CD4-positive, alpha-beta T cell (primary cell): ENCODE measurements at regions of chr2 and their contacts with region 1.

Region 1: DNA sequence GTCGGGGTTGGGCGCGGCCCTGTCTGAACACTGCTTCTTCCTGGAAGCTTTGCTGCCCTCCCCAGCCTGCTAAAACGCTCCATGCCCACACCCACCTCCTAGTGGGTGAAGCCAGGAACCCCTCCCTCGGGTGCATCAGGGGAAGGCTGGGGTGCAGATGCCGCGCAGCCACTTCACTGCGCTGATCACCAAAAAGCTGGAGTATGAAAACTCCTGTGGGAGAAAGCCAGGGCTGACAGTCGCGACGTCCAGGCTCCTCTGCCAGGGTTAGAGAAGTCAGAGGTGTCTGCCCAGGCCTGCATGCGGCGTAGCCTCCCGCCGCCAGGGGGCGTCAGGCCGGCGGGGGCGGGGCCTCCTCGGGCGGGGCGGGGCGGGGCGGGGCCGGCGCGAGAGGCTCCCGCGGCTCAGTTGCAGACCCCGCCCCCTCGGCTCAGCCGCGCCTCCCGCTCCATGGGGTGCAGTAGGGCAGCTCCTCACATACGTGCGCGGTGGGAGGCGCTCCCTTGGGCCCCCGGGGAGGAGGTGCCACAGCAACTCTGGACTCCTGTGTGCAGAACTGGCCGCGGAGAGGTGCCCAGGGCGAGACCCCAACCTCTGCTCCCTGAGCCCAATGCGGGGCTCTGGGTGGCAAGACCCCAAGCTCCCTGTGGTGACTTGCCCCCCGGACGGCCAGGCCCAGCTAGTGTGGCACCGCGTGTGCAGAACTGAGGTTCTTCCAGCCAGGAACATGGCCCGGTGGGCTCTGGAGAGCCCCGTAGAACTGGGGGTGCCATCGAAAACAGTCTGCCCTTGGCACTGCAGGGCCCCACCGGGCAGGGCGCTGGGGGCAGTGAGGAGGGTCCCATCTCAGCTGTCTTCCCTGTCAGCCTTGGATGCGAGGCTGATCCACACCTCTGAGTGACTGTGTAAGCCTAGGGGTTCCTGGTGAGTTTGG is 1.8 kb upstream of the RNPEPL1 start:
- DNase-seq: peak; percentile 89 to 98 (median 95)
- ATAC-seq: peak; percentile 60
- H3K4me3 ChIP-seq: peak overlapping the region; percentile 87
- H3K4me3 Mint-ChIP-seq: peak overlapping the region; percentile 96
- H3K27ac ChIP-seq: peak overlapping the region; percentile 91 to 97
- H3K27ac Mint-ChIP-seq: peak overlapping the region; percentile 98
- H3K4me1 ChIP-seq: peaks cover 88% of the 10 kb centered on the region
- H3K4me1 Mint-ChIP-seq: peaks cover 84% of the 10 kb centered on the region
- H3K27me3 ChIP-seq: no peaks in the 10 kb centered on the region
- H3K27me3 Mint-ChIP-seq: no peaks in the 10 kb centered on the region
- CTCF ChIP-seq: peak; percentile 86

Region 2: DNA sequence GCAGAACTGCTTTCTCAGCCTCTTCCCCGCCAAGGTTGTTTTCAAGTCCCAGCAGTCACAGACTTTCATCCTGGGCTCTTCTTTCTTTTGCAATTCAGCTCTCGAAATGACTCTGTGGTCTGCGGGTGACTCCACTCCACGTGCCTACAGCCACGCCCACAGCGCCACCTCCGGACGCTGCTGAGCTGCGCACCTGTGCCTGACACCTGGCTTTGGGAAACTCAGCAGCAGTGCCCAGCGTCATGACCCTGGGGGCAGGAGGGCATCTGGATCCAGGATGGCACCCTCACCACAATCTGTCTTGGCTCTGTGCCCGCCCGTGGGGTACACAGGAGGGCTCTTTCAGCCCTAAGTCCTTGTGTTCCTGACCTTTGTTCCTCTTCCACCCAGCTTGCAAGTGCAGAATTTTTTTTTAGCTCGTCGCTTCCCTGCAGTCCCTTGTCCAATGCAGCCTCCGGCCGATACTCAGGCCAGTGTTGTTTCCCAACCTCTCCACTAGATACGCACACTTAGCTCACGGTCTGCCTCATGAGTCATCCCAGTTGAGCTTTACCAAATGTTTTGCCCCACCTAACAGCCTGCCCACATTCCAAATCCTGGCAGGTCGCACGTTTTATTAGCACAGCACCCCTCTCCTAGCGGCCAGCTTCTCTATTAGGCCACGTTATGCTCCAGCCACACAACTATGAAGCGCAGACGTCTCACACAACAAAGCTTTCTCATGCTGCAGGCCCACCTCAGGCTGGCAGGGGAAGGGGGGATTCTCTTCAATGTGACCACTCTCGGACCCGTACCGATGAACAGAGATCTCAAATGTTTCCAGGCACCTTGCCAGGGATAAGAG is 13.5 kb after region 1 on chr2:
- CTCF ChIA-PET with region 1: interaction called, 54 read pairs
- POLR2A ChIA-PET with region 1: interaction called, 224 read pairs
- intact Hi-C with region 1: loop called (anchors 1 kb)
- DNase-seq: peak; percentile 68 to 93 (median 78)
- ATAC-seq: peak; percentile 97
- H3K4me3 ChIP-seq: no peak overlapping the region
- H3K4me3 Mint-ChIP-seq: peak overlapping the region; percentile 18
- H3K27ac ChIP-seq: peak overlapping the region; percentile 59 to 69
- H3K27ac Mint-ChIP-seq: peak overlapping the region; percentile 77
- H3K4me1 ChIP-seq: peaks cover 57% of the 10 kb centered on the region
- H3K4me1 Mint-ChIP-seq: peaks cover 33% of the 10 kb centered on the region
- H3K27me3 ChIP-seq: no peaks in the 10 kb centered on the region
- H3K27me3 Mint-ChIP-seq: no peaks in the 10 kb centered on the region
- CTCF ChIP-seq: peak; percentile 66

Region 3: GRCh38 chr2:240624950-240625621 is 58.6 kb after region 1 on chr2 and contains the start of gene GPR35:
- CTCF ChIA-PET with region 1: interaction called, 9 read pairs
- POLR2A ChIA-PET with region 1: interaction called, 26 read pairs
- intact Hi-C with region 1: loop called in 1 of 2 experiments (anchors 5 kb)
- DNase-seq: peak; percentile 37 to 97 (median 68)
- ATAC-seq: peak; percentile 65
- H3K4me3 ChIP-seq: peak within 1 kb of the TSS; percentile 24
- H3K4me3 Mint-ChIP-seq: peak within 1 kb of the TSS; percentile 36
- H3K27ac ChIP-seq: peak within 1 kb of the TSS; percentile 64 to 66
- H3K27ac Mint-ChIP-seq: peak within 1 kb of the TSS; percentile 87
- H3K4me1 ChIP-seq: peaks cover 99% of the 10 kb centered on the region
- H3K4me1 Mint-ChIP-seq: peaks cover 42% of the 10 kb centered on the region
- H3K27me3 ChIP-seq: no peaks in the 10 kb centered on the region
- H3K27me3 Mint-ChIP-seq: no peaks in the 10 kb centered on the region
- CTCF ChIP-seq: no peak
- total RNA-seq, gene GPR35: 7.1 to 7.2 TPM

Region 4: DNA sequence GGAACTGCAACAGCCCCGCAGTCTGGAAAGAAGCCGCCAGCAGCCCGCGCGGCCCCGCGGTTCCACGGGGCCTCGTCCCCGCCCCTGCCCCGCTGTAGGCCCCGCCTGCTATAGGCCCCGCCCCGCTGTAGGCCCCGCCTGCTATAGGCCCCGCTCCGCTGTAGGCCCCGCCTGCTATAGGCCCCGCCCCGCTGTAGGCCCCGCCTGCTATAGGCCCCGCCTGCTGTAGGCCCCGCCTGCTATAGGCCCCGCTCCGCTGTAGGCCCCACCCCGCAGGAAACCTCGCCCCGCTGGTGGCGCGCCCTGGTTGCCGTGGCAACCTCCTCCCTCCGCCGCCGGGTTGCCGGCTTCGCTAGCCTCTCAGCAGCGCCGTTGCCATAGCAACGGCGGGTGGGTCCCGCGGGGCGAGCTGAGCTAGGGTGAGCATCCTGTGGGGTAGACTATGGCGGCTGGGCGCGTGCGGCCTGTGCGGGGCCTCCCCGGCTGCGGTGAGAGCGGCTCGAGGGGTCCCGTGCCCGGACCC is 265.8 kb after region 1 on chr2:
- CTCF ChIA-PET with region 1: no interaction called
- POLR2A ChIA-PET with region 1: interaction called, 3 read pairs
- intact Hi-C with region 1: loop called in 1 of 2 experiments (anchors 2 kb)
- DNase-seq: peak; percentile 98 to 100 (median 99)
- ATAC-seq: peak; percentile 91
- H3K4me3 ChIP-seq: peak overlapping the region; percentile 43
- H3K4me3 Mint-ChIP-seq: peak overlapping the region; percentile 38
- H3K27ac ChIP-seq: no peak overlapping the region
- H3K27ac Mint-ChIP-seq: no peak overlapping the region
- H3K4me1 ChIP-seq: peaks cover 14% of the 10 kb centered on the region
- H3K4me1 Mint-ChIP-seq: no peaks in the 10 kb centered on the region
- H3K27me3 ChIP-seq: peaks cover 17 to 26% of the 10 kb centered on the region in 2 experiments
- H3K27me3 Mint-ChIP-seq: peaks cover 36% of the 10 kb centered on the region
- CTCF ChIP-seq: no peak